AG04450 (cell line): ENCODE measurements at regions of chr1 and their contacts with region 1.

Region 1: DNA sequence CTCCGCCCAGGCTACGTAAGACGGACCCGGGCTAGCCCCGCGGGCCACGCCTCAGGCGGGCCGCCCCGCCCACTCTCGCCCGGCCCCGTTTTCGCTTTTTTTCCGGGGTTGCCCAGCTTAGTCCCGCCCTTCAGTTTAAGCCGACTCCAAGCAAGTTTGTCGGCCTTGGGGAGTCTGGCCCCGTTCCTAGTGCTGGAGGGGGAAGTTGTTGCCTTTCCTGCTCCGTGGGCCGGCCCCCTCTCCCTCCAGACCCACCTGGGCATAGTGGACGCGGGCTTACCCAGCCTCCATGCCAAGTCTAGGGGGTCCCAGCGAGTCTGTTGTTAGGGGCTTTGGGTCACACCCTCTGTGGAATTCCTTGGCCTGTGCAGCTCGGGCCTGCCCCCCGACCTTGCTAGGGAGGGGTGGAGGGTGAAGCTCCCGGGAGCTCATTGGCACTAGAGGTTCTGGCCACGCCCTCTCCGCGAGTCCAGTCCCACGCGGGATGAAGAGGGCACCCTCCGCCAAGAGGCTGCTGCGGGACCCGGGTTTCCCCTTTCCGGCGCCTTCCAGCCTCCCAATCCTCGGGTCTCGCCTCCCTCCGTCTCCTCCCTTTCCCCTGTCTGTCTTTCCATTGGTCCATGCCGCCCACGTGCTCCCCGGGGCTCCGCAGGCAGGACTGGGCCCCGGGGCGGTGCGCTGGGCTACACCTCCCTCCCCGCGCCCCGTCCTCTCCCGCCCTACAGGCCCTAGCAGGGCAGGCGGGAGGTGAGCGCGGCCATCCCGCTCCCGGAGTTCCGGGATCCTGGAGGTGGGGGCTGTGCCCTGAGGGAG is 3.3 kb downstream of the RUSC1 start:
- DNase-seq: peak; percentile 89
- H3K4me3 ChIP-seq: peak overlapping the region; percentile 82
- H3K27ac ChIP-seq: peak overlapping the region; percentile 82
- H3K27me3 ChIP-seq: no peaks in the 10 kb centered on the region
- CTCF ChIP-seq: no peak

Region 2: DNA sequence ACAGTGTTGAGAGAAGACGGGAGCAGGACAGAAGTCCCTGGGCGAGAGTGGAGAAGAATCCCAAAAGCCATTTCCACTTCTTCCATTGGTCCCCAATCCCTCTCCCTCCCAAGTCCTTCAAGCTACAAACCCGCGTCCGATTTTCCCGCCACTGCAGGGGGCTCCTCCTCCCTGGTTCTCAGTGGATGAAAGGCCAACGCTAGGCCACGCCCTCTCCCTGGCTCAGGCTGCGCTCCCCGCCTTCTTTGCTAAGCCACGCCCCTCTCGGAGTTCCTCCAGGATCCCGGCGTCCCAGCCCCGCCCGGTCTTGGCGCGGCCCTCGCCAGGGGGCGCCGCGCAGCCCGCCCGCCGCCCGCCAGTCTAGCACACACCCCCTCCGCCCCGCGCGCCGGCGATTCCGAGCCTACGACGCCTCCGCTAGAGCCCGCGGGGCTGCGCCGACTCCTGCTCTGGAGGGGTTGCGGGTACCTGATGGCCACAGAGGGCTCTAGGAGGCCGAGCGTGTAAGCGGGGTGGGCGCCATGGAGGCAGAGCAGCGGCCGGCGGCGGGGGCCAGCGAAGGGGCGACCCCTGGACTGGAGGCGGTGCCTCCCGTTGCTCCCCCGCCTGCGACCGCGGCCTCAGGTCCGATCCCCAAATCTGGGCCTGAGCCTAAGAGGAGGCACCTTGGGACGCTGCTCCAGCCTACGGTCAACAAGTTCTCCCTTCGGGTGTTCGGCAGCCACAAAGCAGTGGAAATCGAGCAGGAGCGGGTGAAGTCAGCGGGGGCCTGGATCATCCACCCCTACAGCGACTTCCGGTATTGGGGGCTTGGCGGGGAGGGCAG is 46.7 kb before region 1 on chr1 and contains the start of gene HCN3:
- CTCF ChIA-PET with region 1: interaction called, 14 read pairs
- POLR2A ChIA-PET with region 1: interaction called, 11 read pairs
- DNase-seq: peak; percentile 85
- H3K4me3 ChIP-seq: peak within 1 kb of the TSS; percentile 74
- H3K27ac ChIP-seq: no peak within 1 kb of the TSS
- H3K27me3 ChIP-seq: no peaks in the 10 kb centered on the region
- CTCF ChIP-seq: peak; percentile 47
- polyA plus RNA-seq, gene HCN3: 1.5 and 1.7 TPM in 2 replicates

Region 3: DNA sequence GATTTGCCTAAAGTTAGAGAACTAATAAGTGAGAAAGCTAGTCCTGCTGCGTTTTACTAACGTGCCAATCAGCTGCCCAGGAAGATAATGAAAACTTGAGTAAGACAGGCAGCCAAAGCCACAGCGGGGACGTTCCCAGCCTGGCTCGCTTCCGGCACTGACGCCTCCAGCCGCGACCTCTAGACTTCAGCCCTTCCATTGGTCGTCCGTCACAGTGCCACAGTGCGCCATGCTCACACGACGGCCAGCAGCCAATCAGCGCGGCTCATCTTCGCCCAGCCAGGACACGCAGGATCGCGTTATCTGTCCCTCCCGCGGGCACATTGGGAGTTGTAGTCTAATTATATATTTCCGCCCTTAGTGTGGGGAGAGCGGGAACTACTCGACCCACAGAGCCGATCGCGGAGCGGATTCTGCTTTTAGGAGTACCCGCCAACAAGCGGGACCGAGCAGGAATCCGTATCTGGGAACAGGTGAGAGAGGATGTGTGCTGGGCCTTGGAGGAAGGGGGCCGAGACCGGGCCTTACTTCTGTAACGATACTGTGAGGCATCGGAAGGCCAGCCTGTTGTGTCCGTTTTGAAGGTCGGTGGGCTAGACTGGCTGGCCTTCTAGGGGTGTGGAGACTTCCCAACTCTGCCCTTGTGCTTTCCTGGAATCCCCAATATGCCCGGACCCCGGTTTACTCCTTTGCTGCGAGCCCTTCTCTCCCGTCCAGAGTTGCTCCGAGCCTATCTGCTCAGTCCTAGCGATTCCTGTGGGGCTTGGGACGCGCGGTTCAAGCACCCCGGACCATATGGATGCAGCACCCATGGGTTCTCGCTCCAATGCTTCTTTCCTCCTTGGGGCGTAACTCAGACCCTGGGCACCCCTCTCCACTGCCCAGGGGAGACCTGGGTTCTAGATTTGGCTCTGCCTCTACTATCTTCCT is 15.2 kb before region 1 on chr1 and contains the start of gene FDPS:
- CTCF ChIA-PET with region 1: interaction called, 10 read pairs
- POLR2A ChIA-PET with region 1: interaction called, 3 read pairs
- DNase-seq: peak; percentile 95
- H3K4me3 ChIP-seq: peak within 1 kb of the TSS; percentile 85
- H3K27ac ChIP-seq: peak within 1 kb of the TSS; percentile 91
- H3K27me3 ChIP-seq: no peaks in the 10 kb centered on the region
- CTCF ChIP-seq: no peak; the same call in 1 of the 2 replicates
- polyA plus RNA-seq, gene FDPS: 140 and 146 TPM in 2 replicates